Heart right ventricle (tissue), 16 donors: ENCODE measurements at regions of chr1 and their contacts with region 1.

Region 1: GRCh38 chr1:44029906-44030604 is 1.2 kb downstream of the SLC6A9 start:
- DNase-seq: peak; percentile 87 to 88
- ATAC-seq: peak; percentile 87 to 93 (median 90)
- H3K4me3 ChIP-seq: peak overlapping the region; percentile 68 to 97 (median 82)
- H3K27ac ChIP-seq: peak overlapping the region; percentile 26 to 89 (median 80)
- H3K4me1 ChIP-seq: peaks cover 6 to 40% (median 21%) of the 10 kb centered on the region in 9 donors
- H3K27me3 ChIP-seq: peaks cover 0 to 11% (median 0%) of the 10 kb centered on the region in 7 donors
- CTCF ChIP-seq: no peak

Region 2: GRCh38 chr1:43774359-43774758 is 255.7 kb before region 1 on chr1:
- intact Hi-C with region 1: loop called in 2 of 10 experiments (anchors 5 to 10 kb)
- DNase-seq: no peak
- ATAC-seq: no peak
- H3K4me3 ChIP-seq: no peak overlapping the region
- H3K27ac ChIP-seq: no peak overlapping the region
- H3K4me1 ChIP-seq: peaks cover 0 to 15% (median 0%) of the 10 kb centered on the region in 9 donors
- H3K27me3 ChIP-seq: no peaks in the 10 kb centered on the region
- CTCF ChIP-seq: no peak